ENCODE measurements at regions of chr7 and their contacts with region 1.

Region 1: DNA sequence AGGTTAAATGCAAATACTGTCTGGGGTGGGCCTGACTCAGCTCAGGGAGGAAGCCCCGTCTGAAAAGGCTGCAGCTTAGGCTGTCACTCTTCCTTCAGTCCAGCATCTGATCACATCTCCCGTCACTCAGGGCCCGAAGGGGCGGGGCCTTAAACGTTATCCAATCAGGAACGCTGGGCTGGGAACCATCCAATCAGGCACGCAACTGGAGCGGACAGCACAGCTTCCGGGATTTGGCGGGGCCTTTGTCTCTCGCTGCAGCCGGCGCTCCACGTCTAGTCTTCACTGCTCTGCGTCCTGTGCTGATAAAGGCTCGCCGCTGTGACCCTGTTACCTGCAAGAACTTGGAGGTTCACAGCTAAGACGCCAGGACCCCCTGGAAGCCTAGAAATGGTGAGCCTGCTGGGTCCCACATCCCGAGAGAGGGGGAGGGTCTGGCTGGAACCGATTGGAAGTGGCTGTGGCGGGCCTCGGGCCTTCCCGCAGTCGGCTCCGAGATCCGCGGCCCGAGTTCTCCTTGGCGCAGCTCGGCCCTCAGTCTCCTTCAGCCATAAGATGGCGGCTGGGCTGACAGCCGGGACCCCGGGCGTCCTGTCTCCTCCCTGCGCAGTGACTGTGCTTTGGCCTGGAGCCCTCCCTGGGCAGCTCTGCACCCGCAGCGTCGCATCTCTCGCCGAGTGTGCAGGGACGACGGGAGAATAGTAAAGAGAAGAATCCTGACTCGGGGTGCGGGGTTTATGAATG is at the start of gene ZNF92:
- DNase-seq: peak; percentile 97
- ATAC-seq: peak; percentile 99
- H3K4me3 Mint-ChIP-seq: peak within 1 kb of the TSS; percentile 96
- H3K27ac Mint-ChIP-seq: peak within 1 kb of the TSS; percentile 90
- H3K4me1 Mint-ChIP-seq: peaks cover 42% of the 10 kb centered on the region
- H3K27me3 Mint-ChIP-seq: no peaks in the 10 kb centered on the region
- total RNA-seq, gene ZNF92: 15.1 to 17.4 TPM

Region 2: DNA sequence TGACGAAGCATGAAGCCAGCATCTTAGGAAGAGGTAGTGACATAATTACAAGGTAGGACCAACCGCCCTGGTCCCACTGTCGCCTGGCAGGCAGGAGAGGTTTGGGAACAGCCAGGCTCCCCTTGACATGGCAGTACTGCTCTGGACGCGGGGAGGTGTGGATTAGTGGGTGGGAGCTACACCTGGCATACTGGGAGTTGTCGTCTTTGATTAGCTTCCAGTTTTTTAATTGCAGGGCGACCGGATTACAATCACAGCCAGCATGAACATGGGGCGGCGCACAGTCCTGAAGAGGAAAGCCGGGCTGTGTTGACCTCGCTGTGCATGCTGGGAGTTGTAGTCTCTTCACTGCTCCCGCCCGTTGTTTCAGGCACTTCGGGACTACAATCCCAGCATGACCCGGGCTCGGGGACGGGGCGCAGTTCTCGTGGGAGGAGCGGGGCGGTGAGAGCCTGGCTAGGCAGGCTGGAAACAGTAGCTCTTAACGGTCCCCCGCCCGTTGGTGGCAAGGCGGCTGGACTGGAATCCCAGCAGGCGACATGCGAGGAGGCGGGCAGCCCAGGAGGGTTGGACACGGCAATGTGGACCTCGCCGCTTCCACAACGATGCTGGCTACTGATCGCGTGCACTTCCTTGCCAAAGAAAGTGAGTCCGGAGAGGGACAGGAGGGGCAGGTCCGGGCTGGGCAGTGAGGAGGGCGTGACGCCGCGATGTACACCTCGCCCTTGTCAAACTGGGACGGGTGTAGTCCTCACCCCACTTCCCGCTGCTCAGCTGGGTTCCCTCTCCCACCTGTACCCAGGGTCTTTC is 1473.2 kb before region 1 on chr7:
- CTCF ChIA-PET with region 1: no interaction called
- POLR2A ChIA-PET with region 1: no interaction called
- intact Hi-C with region 1: loop called in 1 of 2 experiments (anchors 5 kb)
- DNase-seq: peak; percentile 96
- ATAC-seq: peak; percentile 96
- H3K4me3 Mint-ChIP-seq: peak overlapping the region; percentile 85
- H3K27ac Mint-ChIP-seq: peak overlapping the region; percentile 77
- H3K4me1 Mint-ChIP-seq: no peaks in the 10 kb centered on the region
- H3K27me3 Mint-ChIP-seq: no peaks in the 10 kb centered on the region

Region 3: DNA sequence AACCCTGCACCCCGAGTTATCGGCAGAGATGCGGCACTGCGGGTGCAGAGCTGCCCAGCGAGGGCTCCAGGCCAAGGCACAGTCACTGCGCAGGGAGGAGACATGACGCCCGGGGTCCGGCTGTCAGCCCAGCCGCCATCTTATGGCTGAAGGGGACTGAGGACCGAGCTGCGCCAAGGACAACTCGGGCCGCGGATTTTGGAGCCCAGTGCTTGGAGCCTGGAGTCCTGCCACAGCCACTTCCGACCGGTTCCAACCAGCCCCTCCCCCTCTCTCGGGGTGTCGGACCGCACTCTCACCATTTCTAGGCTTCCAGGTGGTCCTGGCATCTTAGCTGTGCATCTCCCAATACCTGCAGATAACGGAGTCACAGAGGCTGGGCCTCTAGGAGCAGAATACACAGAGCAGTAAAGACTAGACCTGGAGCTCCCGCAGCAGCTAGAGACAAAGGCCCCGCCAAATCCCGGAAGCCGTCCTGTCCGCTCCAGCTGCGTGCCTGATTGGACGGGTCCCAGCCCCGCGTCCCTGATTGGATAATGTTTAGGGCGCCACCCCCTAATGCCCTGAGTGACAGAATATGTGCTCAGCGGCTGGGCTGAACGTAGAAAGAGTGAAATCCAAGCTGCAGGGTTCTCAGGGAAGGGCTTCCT is 811.0 kb before region 1 on chr7 and contains the start of gene ZNF680:
- CTCF ChIA-PET with region 1: no interaction called
- POLR2A ChIA-PET with region 1: no interaction called
- intact Hi-C with region 1: loop called in 1 of 2 experiments (anchors 5 kb)
- DNase-seq: peak; percentile 94
- ATAC-seq: peak; percentile 99
- H3K4me3 Mint-ChIP-seq: peak within 1 kb of the TSS; percentile 99
- H3K27ac Mint-ChIP-seq: peak within 1 kb of the TSS; percentile 100
- H3K4me1 Mint-ChIP-seq: peaks cover 19% of the 10 kb centered on the region
- H3K27me3 Mint-ChIP-seq: no peaks in the 10 kb centered on the region
- total RNA-seq, gene ZNF680: 12.5 to 12.6 TPM

Region 4: GRCh38 chr7:64902806-64903721 is 470.7 kb before region 1 on chr7 and contains the start of gene ZNF273:
- CTCF ChIA-PET with region 1: no interaction called
- POLR2A ChIA-PET with region 1: interaction called, 4 read pairs
- intact Hi-C with region 1: loop called in 1 of 2 experiments (anchors 5 kb)
- DNase-seq: peak; percentile 96
- ATAC-seq: peak; percentile 100
- H3K4me3 Mint-ChIP-seq: peak within 1 kb of the TSS; percentile 98
- H3K27ac Mint-ChIP-seq: peak within 1 kb of the TSS; percentile 95
- H3K4me1 Mint-ChIP-seq: peaks cover 44% of the 10 kb centered on the region
- H3K27me3 Mint-ChIP-seq: no peaks in the 10 kb centered on the region
- total RNA-seq, gene ZNF273: 12.5 to 13.3 TPM

Region 5: DNA sequence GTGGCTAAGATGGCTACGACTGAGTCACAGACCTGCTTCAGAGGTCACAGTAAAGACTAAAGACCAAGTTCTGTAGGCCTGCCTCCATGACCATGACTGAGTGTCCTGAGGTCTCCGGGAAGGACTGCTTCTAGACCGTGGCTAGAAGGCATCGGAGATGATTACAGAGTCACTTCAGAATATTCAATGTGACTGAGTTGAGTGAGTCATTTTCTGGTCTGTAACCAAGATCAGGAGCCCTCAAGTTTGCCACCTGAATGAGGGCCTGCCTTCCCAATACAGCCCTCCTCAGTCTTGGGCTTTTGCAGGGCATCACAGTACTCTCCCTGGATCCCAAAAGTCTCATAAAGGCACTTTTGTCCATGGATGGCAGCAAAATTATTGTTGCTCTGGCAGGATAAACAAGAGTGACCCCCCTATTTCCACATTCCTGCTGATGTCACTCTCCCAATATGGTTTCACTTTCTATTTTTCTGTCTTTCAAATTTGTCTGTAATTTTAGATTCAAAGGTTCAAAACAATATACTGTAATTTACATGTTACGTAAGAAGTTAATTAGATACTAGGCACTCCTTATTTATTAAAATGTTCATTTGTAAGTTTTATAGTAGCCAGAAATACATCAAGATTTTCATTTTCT is 47.9 kb before region 1 on chr7:
- CTCF ChIA-PET with region 1: no interaction called
- POLR2A ChIA-PET with region 1: no interaction called
- intact Hi-C with region 1: no loop called
- DNase-seq: no peak
- ATAC-seq: no peak
- H3K4me3 Mint-ChIP-seq: no peak overlapping the region
- H3K27ac Mint-ChIP-seq: no peak overlapping the region
- H3K4me1 Mint-ChIP-seq: peaks cover 2% of the 10 kb centered on the region
- H3K27me3 Mint-ChIP-seq: no peaks in the 10 kb centered on the region

Region 6: GRCh38 chr7:65750511-65751344 is 376.9 kb after region 1 on chr7:
- CTCF ChIA-PET with region 1: no interaction called
- POLR2A ChIA-PET with region 1: no interaction called
- intact Hi-C with region 1: loop called in 1 of 2 experiments (anchors 2 kb)
- DNase-seq: peak; percentile 93
- ATAC-seq: peak; percentile 99
- H3K4me3 Mint-ChIP-seq: peak overlapping the region; percentile 95
- H3K27ac Mint-ChIP-seq: peak overlapping the region; percentile 94
- H3K4me1 Mint-ChIP-seq: peaks cover 31% of the 10 kb centered on the region
- H3K27me3 Mint-ChIP-seq: no peaks in the 10 kb centered on the region

Region 7: GRCh38 chr7:66114793-66115649 is 741.2 kb after region 1 on chr7 and contains the start of gene CRCP:
- CTCF ChIA-PET with region 1: no interaction called
- POLR2A ChIA-PET with region 1: no interaction called
- intact Hi-C with region 1: loop called in 1 of 2 experiments (anchors 5 kb)
- DNase-seq: peak; percentile 91
- ATAC-seq: peak; percentile 91
- H3K4me3 Mint-ChIP-seq: peak within 1 kb of the TSS; percentile 95
- H3K27ac Mint-ChIP-seq: peak within 1 kb of the TSS; percentile 98
- H3K4me1 Mint-ChIP-seq: peaks cover 39% of the 10 kb centered on the region
- H3K27me3 Mint-ChIP-seq: no peaks in the 10 kb centered on the region
- total RNA-seq, gene CRCP: 24.5 to 27.2 TPM

Measured in activated CD4-positive, alpha-beta T cell treated with anti-CD3 and anti-CD28 coated beads for 36 hours (primary cell).